Posterior cingulate gyrus (tissue), 11 donors: ENCODE measurements at regions of chr20 and their contacts with region 1.

Region 1: DNA sequence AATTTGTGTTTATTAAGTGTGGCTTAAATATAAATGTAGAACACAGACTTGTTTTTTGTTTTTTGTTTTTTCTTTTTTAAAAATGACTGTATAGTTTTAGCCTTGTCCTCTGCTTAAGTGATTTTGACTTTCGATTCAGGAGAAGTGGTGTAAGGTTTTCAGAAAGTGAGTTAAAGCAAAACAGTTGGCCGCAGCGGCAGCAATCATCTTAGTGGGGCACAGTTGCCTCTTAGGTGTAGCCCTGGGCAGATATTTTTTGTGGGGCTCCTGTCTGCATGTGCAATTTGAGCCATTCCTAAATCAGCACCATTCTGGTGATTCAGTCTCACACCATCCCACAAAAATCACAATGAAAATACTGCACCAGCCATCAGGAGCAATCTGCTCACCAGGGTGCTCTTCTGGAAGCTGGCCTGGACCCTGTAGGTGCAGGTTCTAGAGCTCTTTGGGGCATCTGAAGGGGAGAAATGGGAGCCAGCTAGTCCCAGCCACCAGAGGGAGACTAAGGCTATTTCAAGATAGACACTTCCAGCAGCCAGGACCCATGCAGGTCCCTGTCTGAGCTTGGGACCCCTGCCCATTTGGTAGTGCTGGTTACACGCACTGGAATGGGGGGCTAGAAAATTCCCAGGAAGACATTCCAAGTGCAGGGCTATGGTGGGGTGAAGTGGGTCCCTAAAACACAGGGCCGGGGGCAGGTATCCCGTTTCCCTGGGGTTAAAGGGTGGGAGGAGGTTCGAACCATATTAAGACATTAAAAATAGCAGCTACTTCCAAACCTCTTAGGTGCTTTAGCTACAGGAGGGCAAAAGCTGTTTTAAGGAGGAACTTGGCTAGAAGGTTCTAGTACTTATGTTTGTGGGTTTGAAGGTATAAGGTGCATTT is 156.6 kb downstream of the NFATC2 start:
- DNase-seq: peak in 1 of 10 donors; percentile 27

Region 2: DNA sequence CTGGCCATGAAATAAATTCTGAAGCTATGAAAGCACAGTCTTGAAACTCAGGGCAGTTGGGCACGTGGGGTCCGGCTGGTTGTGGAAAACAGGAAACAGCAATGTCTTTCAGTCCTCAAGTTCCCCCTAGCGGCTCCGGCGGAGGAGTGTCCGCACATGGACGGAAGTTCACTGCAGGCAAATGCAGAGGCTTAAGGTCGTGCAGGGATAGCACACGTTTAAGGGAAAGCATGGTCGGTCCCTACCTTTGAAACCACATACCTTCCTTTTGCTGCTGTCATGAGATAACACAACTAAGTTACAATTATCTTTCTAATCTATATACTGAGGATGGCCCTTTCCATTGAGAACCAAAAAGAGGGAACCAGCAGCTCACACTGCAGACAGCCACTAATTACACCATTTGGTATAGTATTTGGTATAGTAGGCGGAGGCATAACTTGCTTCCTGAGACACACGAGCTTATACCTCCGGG is 209.2 kb after region 1 on chr20:
- intact Hi-C with region 1: loop called (anchors 5 kb)
- DNase-seq: peak; percentile 79 to 97 (median 86)